GM18951 (cell line): ENCODE measurements at regions of chr11 and their contacts with region 1.

Region 1: DNA sequence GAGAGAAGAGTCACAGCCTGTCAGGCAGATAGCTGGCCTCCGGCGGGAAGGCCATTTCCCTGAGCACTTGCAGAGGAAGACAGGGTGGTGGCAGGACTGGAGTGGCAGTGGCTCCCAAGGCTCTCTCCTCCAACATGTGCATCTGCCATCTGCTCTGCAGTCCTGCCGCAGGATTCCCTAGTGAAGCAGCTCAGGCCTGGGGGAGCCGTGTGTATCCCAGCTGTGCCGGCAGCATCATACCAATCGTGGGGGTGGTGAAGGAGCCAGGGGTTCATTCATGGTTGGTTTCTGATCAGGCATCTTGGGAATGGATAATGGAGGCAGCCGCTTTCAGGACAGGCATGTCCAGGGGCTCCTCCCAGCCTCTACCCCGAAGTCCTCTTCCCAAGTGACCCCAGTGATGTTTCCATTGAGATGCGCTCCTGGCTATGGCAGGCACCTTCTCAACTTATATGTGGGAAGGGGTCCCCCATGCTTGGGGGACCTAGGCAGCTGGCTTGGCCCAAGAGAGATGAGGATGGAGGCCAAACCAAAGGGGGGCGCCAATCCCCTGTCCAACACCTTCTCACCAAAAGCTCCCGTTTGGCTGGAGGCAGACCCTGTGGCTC is 6.1 kb downstream of the TAGLN start:
- POLR2A ChIP-seq: no peak

Region 2: DNA sequence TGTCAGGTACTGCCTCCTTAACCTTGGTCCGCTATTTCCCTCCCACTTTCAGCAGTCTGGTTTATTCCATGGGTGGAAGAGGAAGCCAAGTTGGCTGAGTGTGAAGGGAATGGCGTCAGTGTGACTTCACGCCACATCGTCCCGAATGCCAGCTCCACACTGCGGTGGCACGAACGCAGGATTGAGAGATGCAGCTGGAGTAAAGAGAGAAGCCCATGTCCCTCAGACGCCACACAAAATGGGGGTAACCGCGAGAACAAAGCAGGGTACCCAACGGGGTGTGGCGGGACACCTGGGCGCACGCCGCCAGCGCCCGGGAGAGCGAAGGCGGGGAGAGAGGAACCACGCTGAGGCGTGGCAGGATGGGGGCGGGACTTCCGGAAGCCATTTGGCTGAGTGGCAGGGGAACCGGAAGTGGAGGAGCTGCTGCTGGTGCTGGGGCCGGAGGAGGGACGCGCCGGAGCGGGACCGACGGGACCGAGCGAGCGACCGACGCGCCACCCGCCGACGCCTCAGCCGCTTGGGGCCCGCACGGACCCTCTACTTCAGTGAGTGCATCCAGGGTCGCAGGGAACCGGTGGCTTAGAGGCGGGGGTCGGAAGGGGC is 61.3 kb before region 1 on chr11 and contains the start of gene PAFAH1B2:
- in situ Hi-C with region 1: loop called (anchors 5 kb)
- POLR2A ChIP-seq: peak; percentile 83

Region 3: GRCh38 chr11:117479372-117479771 is 274.1 kb after region 1 on chr11:
- in situ Hi-C with region 1: no loop called
- POLR2A ChIP-seq: no peak